Prostate gland (tissue), 2 donors: ENCODE measurements at regions of chr3 and their contacts with region 1.

Region 1: GRCh38 chr3:42780892-42781700 is 8.0 kb upstream of the CCDC13 start:
- DNase-seq: peak; percentile 37
- H3K4me3 ChIP-seq: no peak overlapping the region
- H3K27ac ChIP-seq: peak overlapping the region in 1 of 2 donors; percentile 37
- H3K4me1 ChIP-seq: no peaks in the 10 kb centered on the region
- H3K27me3 ChIP-seq: no peaks in the 10 kb centered on the region
- CTCF ChIP-seq: peak; percentile 52 to 89 (median 84)
- POLR2A ChIP-seq: no peak

Region 2: DNA sequence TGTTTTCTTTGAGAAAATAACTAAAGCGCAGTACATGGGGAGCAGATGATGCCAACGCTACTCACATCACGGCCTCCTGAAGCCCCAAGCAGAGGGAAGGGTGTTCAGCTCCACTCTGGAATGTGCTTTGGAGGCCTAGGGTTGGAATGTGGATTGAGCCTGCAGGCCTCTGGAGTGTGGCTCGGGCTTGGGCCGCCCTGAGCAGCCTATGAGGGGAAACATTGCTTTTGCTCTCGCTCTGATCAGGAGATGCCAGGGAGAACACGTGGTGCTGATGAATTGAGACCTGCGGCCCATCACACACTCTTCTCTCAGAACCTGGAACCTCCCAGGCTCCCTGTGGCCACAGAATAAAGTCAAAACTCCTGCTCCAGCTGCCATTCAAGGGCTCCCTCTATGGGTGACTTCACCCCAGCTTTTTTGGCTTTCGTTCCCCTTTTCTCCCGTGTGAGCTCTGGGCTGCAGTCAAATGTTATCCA is 31.3 kb before region 1 on chr3:
- intact Hi-C with region 1: loop called (anchors 2 kb)
- DNase-seq: no peak
- H3K4me3 ChIP-seq: no peak overlapping the region
- H3K27ac ChIP-seq: peak overlapping the region; percentile 1 to 2
- H3K4me1 ChIP-seq: peaks cover 14% of the 10 kb centered on the region
- H3K27me3 ChIP-seq: no peaks in the 10 kb centered on the region
- CTCF ChIP-seq: peak in 2 of 4 experiments; percentile 28 to 32
- POLR2A ChIP-seq: no peak

Region 3: GRCh38 chr3:42823351-42823750 is 42.3 kb after region 1 on chr3:
- intact Hi-C with region 1: loop called (anchors 5 kb)
- DNase-seq: peak; percentile 67
- H3K4me3 ChIP-seq: no peak overlapping the region
- H3K27ac ChIP-seq: no peak overlapping the region
- H3K4me1 ChIP-seq: no peaks in the 10 kb centered on the region
- H3K27me3 ChIP-seq: no peaks in the 10 kb centered on the region
- CTCF ChIP-seq: no peak
- POLR2A ChIP-seq: no peak

Region 4: GRCh38 chr3:42839616-42840015 is 58.5 kb after region 1 on chr3:
- intact Hi-C with region 1: loop called (anchors 5 kb)
- DNase-seq: peak; percentile 57
- H3K4me3 ChIP-seq: no peak overlapping the region
- H3K27ac ChIP-seq: no peak overlapping the region
- H3K4me1 ChIP-seq: no peaks in the 10 kb centered on the region
- H3K27me3 ChIP-seq: no peaks in the 10 kb centered on the region
- CTCF ChIP-seq: peak; percentile 61 to 92 (median 80)
- POLR2A ChIP-seq: no peak

Region 5: DNA sequence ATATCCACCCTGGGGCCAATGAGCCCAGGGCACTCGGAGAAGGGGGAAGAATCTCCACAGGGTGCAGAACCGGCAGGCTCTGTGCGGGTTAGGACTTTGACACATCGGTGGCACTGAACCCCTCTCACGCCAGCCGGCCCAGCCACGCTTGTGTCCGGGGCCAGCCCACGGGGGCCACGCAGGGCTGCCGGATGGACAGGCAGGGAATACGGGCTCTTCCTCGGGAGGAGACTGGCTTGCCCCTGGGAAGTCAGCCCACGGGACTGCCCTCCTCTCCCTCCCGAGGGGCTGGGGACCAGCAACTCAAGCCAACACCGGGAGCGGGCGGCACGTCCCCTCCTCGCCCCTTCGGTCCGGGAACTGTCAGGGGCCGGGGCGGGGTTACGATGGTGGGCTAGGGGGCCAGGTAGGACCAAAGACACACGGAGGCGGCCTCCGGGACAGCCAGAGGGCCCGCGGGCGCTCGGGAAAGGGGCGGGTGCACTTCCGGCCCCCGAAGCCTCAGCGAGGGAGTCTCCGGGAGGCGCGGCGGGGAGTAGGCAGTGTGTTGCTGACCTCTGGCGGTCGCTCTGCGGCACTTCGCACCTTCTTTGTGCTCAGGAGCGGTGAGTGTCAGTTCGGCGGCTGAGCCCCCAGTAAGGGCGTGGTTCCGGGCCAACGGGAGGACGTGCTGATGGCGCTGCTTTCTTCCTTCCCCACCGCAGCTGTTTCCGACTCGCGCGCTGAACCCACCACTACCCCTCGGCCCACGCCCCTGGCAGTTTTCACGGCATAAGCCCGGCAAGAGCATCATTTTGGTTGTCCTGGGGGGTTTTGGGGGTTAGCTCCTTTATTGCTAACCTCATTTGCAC is 99.7 kb after region 1 on chr3:
- intact Hi-C with region 1: loop called (anchors 2 kb)
- DNase-seq: peak; percentile 80
- H3K4me3 ChIP-seq: peak overlapping the region; percentile 58 to 59
- H3K27ac ChIP-seq: peak overlapping the region; percentile 67 to 73
- H3K4me1 ChIP-seq: no peaks in the 10 kb centered on the region
- H3K27me3 ChIP-seq: no peaks in the 10 kb centered on the region
- CTCF ChIP-seq: peak; percentile 73 to 94 (median 90)
- POLR2A ChIP-seq: no peak

Region 6: GRCh38 chr3:42975456-42975855 is 194.4 kb after region 1 on chr3:
- intact Hi-C with region 1: no loop called
- DNase-seq: no peak
- H3K4me3 ChIP-seq: no peak overlapping the region
- H3K27ac ChIP-seq: no peak overlapping the region
- H3K4me1 ChIP-seq: no peaks in the 10 kb centered on the region
- H3K27me3 ChIP-seq: no peaks in the 10 kb centered on the region
- CTCF ChIP-seq: no peak
- POLR2A ChIP-seq: no peak